Naive thymus-derived CD4-positive, alpha-beta T cell (primary cell): ENCODE measurements at regions of chr2 and their contacts with region 1.

Region 1: GRCh38 chr2:121649596-121650314 is 493 bp upstream of the CLASP1 start:
- DNase-seq: peak; percentile 89 to 99 (median 97)
- ATAC-seq: peak; percentile 97
- H3K4me3 ChIP-seq: peak overlapping the region; percentile 88
- H3K4me3 Mint-ChIP-seq: peak overlapping the region; percentile 92 to 100 (median 98)
- H3K27ac ChIP-seq: peak overlapping the region; percentile 90
- H3K27ac Mint-ChIP-seq: peak overlapping the region; percentile 98 to 100 (median 99)
- H3K4me1 ChIP-seq: peaks cover 10 to 11% of the 10 kb centered on the region in 2 donors
- H3K4me1 Mint-ChIP-seq: peaks cover 54 to 88% (median 76%) of the 10 kb centered on the region in 7 donors
- H3K27me3 ChIP-seq: no peaks in the 10 kb centered on the region
- H3K27me3 Mint-ChIP-seq: peaks cover 0 to 2% (median 0%) of the 10 kb centered on the region in 5 donors

Region 2: GRCh38 chr2:121400201-121400600 is 249.6 kb before region 1 on chr2:
- CTCF ChIA-PET with region 1: interaction called, 3 read pairs
- POLR2A ChIA-PET with region 1: no interaction called
- intact Hi-C with region 1: loop called (anchors 5 kb)
- DNase-seq: no peak
- ATAC-seq: no peak
- H3K4me3 ChIP-seq: no peak overlapping the region
- H3K4me3 Mint-ChIP-seq: no peak overlapping the region
- H3K27ac ChIP-seq: no peak overlapping the region
- H3K27ac Mint-ChIP-seq: peak overlapping the region in 2 of 9 donors; percentile 38 to 67
- H3K4me1 ChIP-seq: no peaks in the 10 kb centered on the region
- H3K4me1 Mint-ChIP-seq: peaks cover 0 to 3% (median 0%) of the 10 kb centered on the region in 7 donors
- H3K27me3 ChIP-seq: no peaks in the 10 kb centered on the region
- H3K27me3 Mint-ChIP-seq: no peaks in the 10 kb centered on the region

Region 3: DNA sequence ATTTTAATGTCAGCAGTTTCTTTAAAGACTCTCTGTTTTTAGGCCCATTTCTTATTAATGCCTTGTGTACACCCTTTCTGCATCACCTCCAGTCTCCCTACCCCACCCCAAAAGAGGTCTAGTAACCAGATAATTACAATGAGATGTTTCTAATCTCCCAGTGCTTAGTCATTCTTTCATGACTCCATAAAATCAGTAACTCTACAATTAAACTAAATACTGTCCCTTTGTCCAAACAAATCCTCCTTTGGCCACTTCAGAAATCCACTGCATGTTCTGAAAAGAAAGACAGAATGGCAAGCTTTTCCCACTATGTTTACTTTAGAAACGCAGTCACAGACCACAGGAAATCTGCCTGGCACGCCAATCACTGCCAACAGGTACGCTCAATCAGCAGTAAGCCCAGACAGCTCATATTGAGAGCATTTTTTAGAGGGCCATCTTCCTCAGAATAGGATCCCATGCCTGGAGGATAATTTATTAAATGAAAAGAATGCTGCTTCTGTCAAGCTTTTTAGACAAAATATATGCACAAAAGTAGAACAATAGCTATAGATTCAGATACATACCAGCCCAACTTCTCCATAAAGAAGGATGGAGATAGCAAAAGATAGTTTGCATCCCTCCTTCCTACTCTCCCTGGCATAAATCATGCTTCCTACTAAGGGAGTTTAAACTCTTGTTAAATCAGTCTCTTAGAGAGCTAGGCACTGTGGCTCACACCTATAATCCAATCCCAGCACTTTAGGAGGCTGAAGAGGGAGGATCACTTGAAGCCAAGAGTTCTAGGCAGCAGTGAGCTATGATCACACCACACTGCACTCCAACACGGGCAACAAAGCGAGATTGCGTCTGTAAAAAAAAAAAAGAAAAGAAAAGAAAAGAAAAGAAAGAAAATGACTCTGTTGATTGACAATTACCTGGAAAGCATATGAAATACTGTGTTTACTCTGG is 15.1 kb before region 1 on chr2:
- CTCF ChIA-PET with region 1: no interaction called
- POLR2A ChIA-PET with region 1: interaction called, 5 read pairs
- intact Hi-C with region 1: loop called in 1 of 2 experiments (anchors 1 kb)
- DNase-seq: no peak
- ATAC-seq: no peak
- H3K4me3 ChIP-seq: no peak overlapping the region
- H3K4me3 Mint-ChIP-seq: peak overlapping the region in 3 of 10 donors; percentile 3 to 32 (median 24)
- H3K27ac ChIP-seq: no peak overlapping the region
- H3K27ac Mint-ChIP-seq: peak overlapping the region in 8 of 9 donors; percentile 29 to 84 (median 54)
- H3K4me1 ChIP-seq: peaks cover 0 to 7% of the 10 kb centered on the region in 2 donors
- H3K4me1 Mint-ChIP-seq: peaks cover 23 to 55% (median 50%) of the 10 kb centered on the region in 7 donors
- H3K27me3 ChIP-seq: no peaks in the 10 kb centered on the region
- H3K27me3 Mint-ChIP-seq: no peaks in the 10 kb centered on the region

Region 4: DNA sequence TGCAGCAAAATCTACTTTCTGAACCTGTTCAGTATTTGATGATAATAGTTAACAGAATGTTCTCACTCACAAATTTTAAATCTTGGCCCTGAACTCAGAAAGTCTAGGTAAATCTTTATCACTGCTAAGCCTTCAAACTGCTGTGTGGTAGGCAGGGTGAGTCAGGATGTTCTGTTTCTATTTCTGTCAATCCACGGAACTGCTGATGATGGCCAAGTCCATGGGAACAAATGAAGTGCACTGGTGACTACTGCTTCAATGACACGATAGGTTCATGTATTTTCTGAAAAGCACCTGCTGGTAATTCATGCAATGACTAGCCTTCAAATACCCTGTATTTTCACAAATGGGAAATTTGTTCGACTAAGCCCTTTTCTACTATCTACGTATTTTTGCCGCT is 72.7 kb after region 1 on chr2:
- CTCF ChIA-PET with region 1: no interaction called
- POLR2A ChIA-PET with region 1: no interaction called
- intact Hi-C with region 1: loop called (anchors 1 kb)
- DNase-seq: no peak
- ATAC-seq: no peak
- H3K4me3 ChIP-seq: no peak overlapping the region
- H3K4me3 Mint-ChIP-seq: no peak overlapping the region
- H3K27ac ChIP-seq: no peak overlapping the region
- H3K27ac Mint-ChIP-seq: no peak overlapping the region
- H3K4me1 ChIP-seq: peaks cover 0 to 6% of the 10 kb centered on the region in 2 donors
- H3K4me1 Mint-ChIP-seq: peaks cover 2 to 22% (median 6%) of the 10 kb centered on the region in 7 donors
- H3K27me3 ChIP-seq: no peaks in the 10 kb centered on the region
- H3K27me3 Mint-ChIP-seq: no peaks in the 10 kb centered on the region

Region 5: GRCh38 chr2:121755236-121756111 is 105.7 kb after region 1 on chr2 and contains the start of gene TSN:
- CTCF ChIA-PET with region 1: no interaction called
- POLR2A ChIA-PET with region 1: interaction called, 5 read pairs
- intact Hi-C with region 1: loop called (anchors 1 kb)
- DNase-seq: peak; percentile 94 to 97 (median 96)
- ATAC-seq: peak; percentile 99
- H3K4me3 ChIP-seq: peak within 1 kb of the TSS; percentile 91
- H3K4me3 Mint-ChIP-seq: peak within 1 kb of the TSS; percentile 90 to 100 (median 96)
- H3K27ac ChIP-seq: peak within 1 kb of the TSS; percentile 82
- H3K27ac Mint-ChIP-seq: peak within 1 kb of the TSS; percentile 69 to 98 (median 94)
- H3K4me1 ChIP-seq: peaks cover 4 to 10% of the 10 kb centered on the region in 2 donors
- H3K4me1 Mint-ChIP-seq: peaks cover 20 to 43% (median 32%) of the 10 kb centered on the region in 7 donors
- H3K27me3 ChIP-seq: no peaks in the 10 kb centered on the region
- H3K27me3 Mint-ChIP-seq: no peaks in the 10 kb centered on the region
- total RNA-seq, gene TSN: 35.8 to 65.8 (median 58.3) TPM